ENCODE measurements at regions of chr3 and their contacts with region 1.

Region 1: GRCh38 chr3:111808419-111808818 is 50.6 kb upstream of the PHLDB2 start:
- DNase-seq: no peak
- ATAC-seq: no peak
- H3K4me3 ChIP-seq: no peak overlapping the region
- H3K4me3 Mint-ChIP-seq: no peak overlapping the region
- H3K27ac ChIP-seq: no peak overlapping the region
- H3K27ac Mint-ChIP-seq: no peak overlapping the region
- H3K4me1 ChIP-seq: no peaks in the 10 kb centered on the region
- H3K4me1 Mint-ChIP-seq: no peaks in the 10 kb centered on the region
- H3K27me3 ChIP-seq: no peaks in the 10 kb centered on the region
- H3K27me3 Mint-ChIP-seq: no peaks in the 10 kb centered on the region
- CTCF ChIP-seq: no peak

Region 2: GRCh38 chr3:111776827-111777483 is 31.5 kb before region 1 on chr3:
- CTCF ChIA-PET with region 1: no interaction called
- POLR2A ChIA-PET with region 1: no interaction called
- intact Hi-C with region 1: loop called in 1 of 2 experiments (anchors 1 kb)
- DNase-seq: no peak
- ATAC-seq: no peak
- H3K4me3 ChIP-seq: no peak overlapping the region
- H3K4me3 Mint-ChIP-seq: no peak overlapping the region
- H3K27ac ChIP-seq: no peak overlapping the region
- H3K27ac Mint-ChIP-seq: no peak overlapping the region
- H3K4me1 ChIP-seq: no peaks in the 10 kb centered on the region
- H3K4me1 Mint-ChIP-seq: no peaks in the 10 kb centered on the region
- H3K27me3 ChIP-seq: no peaks in the 10 kb centered on the region
- H3K27me3 Mint-ChIP-seq: no peaks in the 10 kb centered on the region
- CTCF ChIP-seq: no peak

Region 3: DNA sequence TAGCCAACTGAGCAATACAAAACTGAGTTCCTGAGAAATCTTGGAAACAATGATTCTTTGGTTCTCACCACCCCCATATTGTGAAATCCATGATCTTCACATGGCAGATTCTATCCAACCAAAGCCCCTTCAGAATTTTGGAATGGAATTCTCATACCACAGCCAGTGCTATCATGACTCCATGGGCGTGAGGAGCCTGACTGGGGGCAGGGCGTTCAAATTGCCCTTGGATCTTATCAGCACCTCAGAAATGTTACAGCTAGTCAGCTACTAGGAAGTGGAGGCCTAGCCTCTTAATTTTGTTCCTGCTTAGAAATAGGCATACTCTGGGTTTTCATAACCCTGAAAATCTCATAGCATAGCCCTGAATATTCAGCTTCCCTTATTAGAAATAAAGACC is 18.6 kb before region 1 on chr3:
- CTCF ChIA-PET with region 1: no interaction called
- POLR2A ChIA-PET with region 1: no interaction called
- intact Hi-C with region 1: no loop called
- DNase-seq: no peak
- ATAC-seq: no peak
- H3K4me3 ChIP-seq: no peak overlapping the region
- H3K4me3 Mint-ChIP-seq: no peak overlapping the region
- H3K27ac ChIP-seq: no peak overlapping the region
- H3K27ac Mint-ChIP-seq: no peak overlapping the region
- H3K4me1 ChIP-seq: no peaks in the 10 kb centered on the region
- H3K4me1 Mint-ChIP-seq: no peaks in the 10 kb centered on the region
- H3K27me3 ChIP-seq: no peaks in the 10 kb centered on the region
- H3K27me3 Mint-ChIP-seq: no peaks in the 10 kb centered on the region
- CTCF ChIP-seq: no peak